Heart right ventricle (tissue), 16 donors: ENCODE measurements at regions of chr5 and their contacts with region 1.

Region 1: GRCh38 chr5:71922584-71923106 is 184.6 kb upstream of the MAP1B start:
- DNase-seq: no peak
- ATAC-seq: peak; percentile 49 to 87 (median 66)
- H3K4me3 ChIP-seq: no peak overlapping the region
- H3K27ac ChIP-seq: peak overlapping the region; percentile 2 to 77 (median 53)
- H3K4me1 ChIP-seq: peaks cover 0 to 42% (median 25%) of the 10 kb centered on the region in 9 donors
- H3K27me3 ChIP-seq: no peaks in the 10 kb centered on the region
- CTCF ChIP-seq: peak in 4 of 9 donors; percentile 11 to 49 (median 30)

Region 2: GRCh38 chr5:71384706-71385105 is 537.9 kb before region 1 on chr5:
- intact Hi-C with region 1: no loop called
- DNase-seq: no peak
- ATAC-seq: no peak
- H3K4me3 ChIP-seq: no peak overlapping the region
- H3K27ac ChIP-seq: no peak overlapping the region
- H3K4me1 ChIP-seq: no peaks in the 10 kb centered on the region
- H3K27me3 ChIP-seq: no peaks in the 10 kb centered on the region
- CTCF ChIP-seq: no peak

Region 3: GRCh38 chr5:71974165-71974564 is 51.5 kb after region 1 on chr5:
- intact Hi-C with region 1: loop called in 1 of 10 experiments (anchors 5 kb)
- DNase-seq: peak in 1 of 2 donors; percentile 11
- ATAC-seq: peak in 7 of 8 donors; percentile 28 to 82 (median 58)
- H3K4me3 ChIP-seq: no peak overlapping the region
- H3K27ac ChIP-seq: peak overlapping the region; percentile 39 to 71 (median 58)
- H3K4me1 ChIP-seq: peaks cover 0 to 24% (median 15%) of the 10 kb centered on the region in 9 donors
- H3K27me3 ChIP-seq: no peaks in the 10 kb centered on the region
- CTCF ChIP-seq: no peak